ENCODE measurements at regions of chr7 and their contacts with region 1.

Region 1: GRCh38 chr7:6516387-6516983 is 34.8 kb downstream of the GRID2IP start:
- DNase-seq: peak; percentile 19
- H3K4me3 ChIP-seq: no peak overlapping the region
- H3K27me3 ChIP-seq: peaks cover 1% of the 10 kb centered on the region; the same call in 1 of the 2 replicates
- CTCF ChIP-seq: peak; percentile 90

Region 2: GRCh38 chr7:6505685-6506574 is 10.6 kb before region 1 on chr7:
- CTCF ChIA-PET with region 1: interaction called, 18 read pairs
- POLR2A ChIA-PET with region 1: no interaction called
- DNase-seq: no peak
- H3K4me3 ChIP-seq: no peak overlapping the region
- H3K27me3 ChIP-seq: peaks cover 6% of the 10 kb centered on the region
- CTCF ChIP-seq: no peak

Region 3: DNA sequence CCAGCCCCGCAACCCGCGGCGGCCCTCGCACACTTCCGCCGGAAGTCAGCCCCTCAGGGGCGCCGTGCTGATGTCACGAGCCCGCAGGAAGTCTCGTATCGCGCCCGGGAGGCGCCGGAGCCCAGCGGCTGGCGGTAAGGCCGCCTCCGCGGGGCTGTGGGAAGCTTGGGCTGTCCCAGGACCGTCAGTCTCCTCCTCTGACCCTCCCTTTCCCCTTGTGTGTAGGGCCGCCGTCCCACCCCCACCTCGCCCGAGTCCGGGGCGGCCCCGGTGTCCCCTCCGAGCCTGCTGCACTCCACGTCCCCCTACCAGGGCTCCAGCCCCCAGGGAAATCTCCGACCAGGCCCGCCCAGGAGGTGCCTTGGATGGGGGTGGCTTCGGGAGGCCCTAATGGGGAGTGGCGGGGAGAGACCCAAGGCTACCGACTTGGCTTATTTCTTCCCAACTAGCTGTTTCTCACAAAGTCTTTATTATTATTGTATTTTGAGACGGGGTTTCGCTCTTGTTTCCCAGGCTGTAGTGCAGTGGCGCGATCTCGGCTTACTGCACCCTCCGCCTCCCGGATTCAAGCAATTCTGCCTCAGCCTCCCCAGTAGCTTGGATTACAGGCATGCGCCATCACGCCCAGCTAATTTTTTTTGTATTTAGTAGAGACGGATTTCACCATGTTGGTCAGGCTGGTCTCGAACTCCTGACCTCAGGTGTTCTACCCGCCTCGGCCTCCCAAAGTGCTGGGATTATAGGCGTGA is 61.1 kb after region 1 on chr7 and contains the start of gene ZDHHC4:
- CTCF ChIA-PET with region 1: interaction called, 12 read pairs
- POLR2A ChIA-PET with region 1: interaction called, 3 read pairs
- DNase-seq: peak; percentile 22
- H3K4me3 ChIP-seq: peak within 1 kb of the TSS; percentile 73
- H3K27me3 ChIP-seq: no peaks in the 10 kb centered on the region
- CTCF ChIP-seq: no peak
- polyA plus RNA-seq, gene ZDHHC4: 113 and 116 TPM in 2 replicates